ENCODE measurements at regions of chr1 and their contacts with region 1.

Region 1: GRCh38 chr1:234486498-234487448 is 7.8 kb upstream of the TARBP1 start:
- DNase-seq: peak; percentile 83
- H3K4me3 Mint-ChIP-seq: peak overlapping the region; percentile 68
- H3K27ac Mint-ChIP-seq: peak overlapping the region; percentile 96
- H3K4me1 Mint-ChIP-seq: peaks cover 35% of the 10 kb centered on the region
- H3K27me3 Mint-ChIP-seq: peaks cover 12% of the 10 kb centered on the region

Region 2: DNA sequence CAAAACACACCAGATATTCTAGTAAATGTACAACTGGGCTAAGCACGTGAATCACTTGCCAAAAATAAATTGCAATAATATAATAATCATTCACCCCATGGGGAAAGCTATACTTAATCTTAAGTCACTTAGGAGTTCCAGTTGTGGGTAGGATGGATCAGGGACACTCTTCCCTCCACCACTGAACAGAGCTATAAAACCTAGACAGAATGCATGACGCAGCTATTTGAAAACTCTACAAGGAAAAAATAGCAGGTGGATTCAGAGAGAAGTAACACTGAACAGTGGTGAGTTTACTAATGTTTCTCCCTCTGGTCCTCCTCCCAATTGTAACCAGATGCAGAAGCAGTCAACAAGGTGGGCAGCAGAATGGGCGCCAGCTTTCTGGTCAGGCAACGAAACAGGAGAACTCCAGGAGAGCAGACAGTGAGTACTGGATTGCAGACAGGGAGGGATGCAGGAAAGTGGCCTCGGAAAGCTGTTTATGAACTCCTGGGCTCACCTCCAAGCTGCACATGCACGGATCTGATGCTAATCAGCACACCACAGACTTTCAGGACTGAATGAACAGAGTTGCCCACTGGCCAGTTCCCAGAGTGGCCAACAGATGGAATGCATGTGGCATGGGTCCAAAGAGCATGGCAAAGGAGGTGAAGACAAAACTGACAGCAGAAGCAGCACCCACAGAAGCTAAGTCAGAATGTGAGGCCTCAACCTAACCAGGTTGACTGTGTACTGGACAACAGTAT is 49.2 kb before region 1 on chr1:
- intact Hi-C with region 1: no loop called
- DNase-seq: no peak
- H3K4me3 Mint-ChIP-seq: no peak overlapping the region
- H3K27ac Mint-ChIP-seq: no peak overlapping the region
- H3K4me1 Mint-ChIP-seq: peaks cover 10% of the 10 kb centered on the region
- H3K27me3 Mint-ChIP-seq: no peaks in the 10 kb centered on the region

Region 3: DNA sequence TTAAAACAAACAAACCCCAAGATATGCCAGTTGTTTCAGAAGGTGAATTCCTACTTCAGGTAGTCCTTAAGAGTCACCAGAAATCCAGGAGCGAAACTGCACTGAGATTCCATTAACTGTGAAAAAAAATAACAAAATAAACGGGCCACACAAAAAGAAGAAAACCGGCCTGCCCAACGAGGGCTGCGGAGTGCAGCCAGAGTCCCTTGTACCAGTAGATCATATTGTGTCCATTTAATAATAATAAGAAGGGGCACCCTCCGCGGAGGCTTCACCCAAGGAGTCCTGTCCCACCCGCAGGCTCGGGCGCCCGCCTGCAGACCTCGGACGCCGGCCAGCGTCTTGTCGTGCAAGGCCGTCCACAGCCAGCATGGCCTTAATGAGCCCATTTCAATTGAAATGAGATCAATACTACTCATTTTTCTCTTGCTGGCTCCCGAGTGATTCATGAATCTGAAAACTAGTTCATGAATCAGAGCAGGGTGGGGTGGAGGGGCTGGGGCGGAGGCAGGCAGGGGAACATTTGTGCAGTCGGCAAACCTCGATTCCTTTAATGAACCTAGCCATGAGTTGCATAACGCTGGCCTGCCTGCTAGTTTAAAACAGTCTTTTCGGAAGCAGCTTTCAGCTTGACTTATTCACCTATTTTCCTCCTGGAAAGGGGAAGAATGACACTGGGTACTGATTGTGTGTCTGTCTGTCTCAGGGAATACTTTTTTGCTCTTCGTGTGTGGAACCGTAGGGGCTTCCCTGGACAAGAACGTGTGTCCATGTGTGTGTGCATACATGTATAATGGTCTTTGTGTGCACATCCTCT is 236.3 kb after region 1 on chr1:
- intact Hi-C with region 1: loop called (anchors 2 kb)
- DNase-seq: peak; percentile 66
- H3K4me3 Mint-ChIP-seq: peak overlapping the region; percentile 76
- H3K27ac Mint-ChIP-seq: peak overlapping the region; percentile 96
- H3K4me1 Mint-ChIP-seq: peaks cover 82% of the 10 kb centered on the region
- H3K27me3 Mint-ChIP-seq: peaks cover 2% of the 10 kb centered on the region

Measured in activated CD4-positive, alpha-beta T cell treated with anti-CD3 and anti-CD28 coated beads, Interleukin-2, amount 10 ng/mL, durations not matched to agents 24 days and 14 days (primary cell).